ENCODE measurements at regions of chr1 and their contacts with region 1.

Region 1: GRCh38 chr1:1374929-1375662 is at the start of gene AURKAIP1:
- DNase-seq: peak; percentile 100
- H3K4me3 ChIP-seq: peak within 1 kb of the TSS; percentile 88 to 95 (median 92)
- H3K27ac ChIP-seq: peak within 1 kb of the TSS; percentile 76
- H3K4me1 ChIP-seq: peaks cover 27% of the 10 kb centered on the region
- H3K27me3 ChIP-seq: no peaks in the 10 kb centered on the region
- CTCF ChIP-seq: peak in 1 of 2 donors; percentile 52
- total RNA-seq, gene AURKAIP1: 85.0 to 167 TPM

Region 2: DNA sequence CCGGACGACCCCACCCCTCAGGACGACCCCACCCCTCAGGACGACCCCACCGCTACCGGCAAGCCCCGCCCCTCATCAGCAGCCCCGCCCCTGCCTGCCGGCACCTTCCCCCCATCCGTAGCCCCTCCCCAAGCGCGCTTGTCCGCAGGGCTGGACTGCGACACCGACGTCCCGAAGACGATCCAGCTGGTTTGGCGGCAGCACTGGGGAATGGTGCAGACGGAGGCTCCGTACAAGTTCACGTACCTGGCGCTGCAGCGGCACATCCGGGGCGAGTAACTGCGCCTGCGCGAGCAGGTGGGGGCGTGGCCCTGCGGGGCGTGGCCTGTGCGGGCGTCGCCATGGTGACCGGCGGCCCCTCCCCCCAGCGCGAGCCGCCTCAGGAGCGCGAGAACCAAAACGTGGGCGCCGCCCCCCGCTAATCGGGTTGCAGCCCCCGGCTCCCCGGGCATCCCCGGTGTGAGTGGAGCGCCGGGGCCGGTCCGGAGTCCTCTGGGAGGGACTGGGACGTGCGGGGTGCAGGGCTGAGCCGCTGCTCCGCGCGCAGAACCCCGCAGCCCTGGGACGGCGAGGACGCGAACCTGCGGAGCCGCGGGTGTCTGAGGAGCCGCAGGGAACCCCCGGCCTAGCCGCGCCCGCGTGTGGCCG is 305.9 kb before region 1 on chr1:
- CTCF ChIA-PET with region 1: no interaction called
- dilution Hi-C with region 1: loop called (anchors 5 kb)
- in situ Hi-C with region 1: no loop called
- intact Hi-C with region 1: no loop called
- DNase-seq: peak; percentile 69
- H3K4me3 ChIP-seq: peak overlapping the region in 2 of 3 experiments; percentile 50 to 69
- H3K27ac ChIP-seq: no peak overlapping the region
- H3K4me1 ChIP-seq: peaks cover 25% of the 10 kb centered on the region
- H3K27me3 ChIP-seq: no peaks in the 10 kb centered on the region
- CTCF ChIP-seq: no peak

Region 3: DNA sequence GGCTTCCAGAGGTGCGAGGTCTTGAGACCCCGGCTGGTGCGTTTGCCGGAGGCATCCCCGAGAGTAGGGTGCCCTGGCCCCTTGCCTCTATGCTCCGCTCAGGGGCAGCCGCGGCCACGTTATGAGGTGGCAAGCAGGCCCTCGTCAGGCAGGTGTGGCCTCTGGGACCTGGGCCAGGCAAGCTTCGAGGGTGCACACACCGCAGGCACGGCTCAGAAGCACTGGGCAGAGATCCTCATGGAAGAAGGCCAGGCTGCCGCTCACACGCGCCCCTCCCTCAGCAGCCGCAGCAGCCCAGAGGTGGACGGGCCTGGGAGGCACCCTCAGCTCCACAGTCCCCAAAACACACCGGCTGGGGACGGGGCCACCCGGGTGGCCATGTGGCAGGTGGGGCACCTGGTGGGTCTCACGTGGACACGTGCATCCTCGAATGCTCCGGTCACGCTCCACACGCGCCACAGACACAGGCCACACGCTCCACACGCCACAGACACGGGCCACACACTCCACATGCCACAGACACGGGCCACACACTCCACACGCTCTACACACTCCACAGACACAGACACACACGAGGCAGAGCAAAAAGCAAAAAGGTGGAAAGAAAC is 149.8 kb before region 1 on chr1:
- CTCF ChIA-PET with region 1: no interaction called
- dilution Hi-C with region 1: no loop called
- in situ Hi-C with region 1: no loop called
- intact Hi-C with region 1: no loop called
- DNase-seq: no peak
- H3K4me3 ChIP-seq: no peak overlapping the region
- H3K27ac ChIP-seq: no peak overlapping the region
- H3K4me1 ChIP-seq: peaks cover 6% of the 10 kb centered on the region
- H3K27me3 ChIP-seq: no peaks in the 10 kb centered on the region
- CTCF ChIP-seq: no peak

Region 4: DNA sequence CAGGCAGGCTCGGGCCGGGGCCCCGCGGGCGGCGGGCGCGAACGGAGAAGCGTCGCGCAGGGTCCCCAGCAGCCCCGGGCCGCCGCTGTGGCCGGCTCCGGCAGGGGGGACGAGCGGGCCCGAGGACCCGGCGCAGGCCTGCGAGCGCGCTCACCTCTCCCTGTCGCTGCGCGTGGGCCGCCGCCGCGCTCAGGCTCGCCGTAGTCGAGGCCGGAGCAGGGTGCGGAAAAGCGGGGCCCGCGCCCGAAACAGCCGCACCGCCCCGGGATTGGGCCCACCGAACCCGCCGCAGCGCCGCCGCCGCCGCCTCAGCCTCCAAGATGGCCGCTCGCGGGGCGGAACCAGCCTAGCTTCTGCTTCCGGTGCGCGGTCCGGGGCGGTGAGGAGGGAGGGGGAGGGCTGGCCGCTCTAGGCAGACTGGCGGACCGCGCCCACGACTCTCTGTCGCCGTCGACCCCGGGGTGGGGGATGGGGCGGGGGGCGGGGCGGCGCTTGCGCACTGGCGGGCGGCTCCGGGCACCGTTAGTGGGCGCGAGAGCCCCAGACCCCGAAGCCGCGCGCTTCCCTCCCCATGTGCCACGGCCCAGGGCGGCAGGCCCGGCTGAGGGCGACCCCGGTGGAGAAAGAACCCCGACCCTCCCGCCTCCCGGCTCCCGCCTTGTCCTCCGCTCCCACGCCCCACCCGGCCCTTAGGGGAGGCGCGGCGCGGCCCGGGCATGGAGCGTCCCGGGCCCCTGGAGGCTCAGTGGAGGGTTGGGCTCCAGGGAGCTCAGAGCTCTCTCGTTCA is 101.4 kb before region 1 on chr1 and contains the start of gene UBE2J2:
- CTCF ChIA-PET with region 1: no interaction called
- dilution Hi-C with region 1: loop called (anchors 5 kb)
- in situ Hi-C with region 1: no loop called
- intact Hi-C with region 1: no loop called
- DNase-seq: peak; percentile 74
- H3K4me3 ChIP-seq: peak within 1 kb of the TSS; percentile 59 to 87 (median 80)
- H3K27ac ChIP-seq: peak within 1 kb of the TSS; percentile 46
- H3K4me1 ChIP-seq: peaks cover 31% of the 10 kb centered on the region
- H3K27me3 ChIP-seq: no peaks in the 10 kb centered on the region
- CTCF ChIP-seq: no peak
- total RNA-seq, gene UBE2J2: 36.7 to 59.7 TPM

Region 5: GRCh38 chr1:1418463-1419350 is 43.6 kb after region 1 on chr1:
- CTCF ChIA-PET with region 1: no interaction called
- dilution Hi-C with region 1: no loop called
- in situ Hi-C with region 1: no loop called
- intact Hi-C with region 1: no loop called
- DNase-seq: no peak
- H3K4me3 ChIP-seq: no peak overlapping the region
- H3K27ac ChIP-seq: no peak overlapping the region
- H3K4me1 ChIP-seq: peaks cover 43% of the 10 kb centered on the region
- H3K27me3 ChIP-seq: no peaks in the 10 kb centered on the region
- CTCF ChIP-seq: no peak

Region 6: GRCh38 chr1:1435106-1435903 is 60.2 kb after region 1 on chr1 and contains the start of gene VWA1:
- CTCF ChIA-PET with region 1: no interaction called
- dilution Hi-C with region 1: loop called (anchors 5 kb)
- in situ Hi-C with region 1: no loop called
- intact Hi-C with region 1: loop called (anchors 2 kb)
- DNase-seq: peak; percentile 51
- H3K4me3 ChIP-seq: peak within 1 kb of the TSS in 2 of 3 experiments; percentile 47 to 52
- H3K27ac ChIP-seq: no peak within 1 kb of the TSS
- H3K4me1 ChIP-seq: peaks cover 48% of the 10 kb centered on the region
- H3K27me3 ChIP-seq: no peaks in the 10 kb centered on the region
- CTCF ChIP-seq: no peak
- total RNA-seq, gene VWA1: 11.3 to 27.3 TPM

Region 7: DNA sequence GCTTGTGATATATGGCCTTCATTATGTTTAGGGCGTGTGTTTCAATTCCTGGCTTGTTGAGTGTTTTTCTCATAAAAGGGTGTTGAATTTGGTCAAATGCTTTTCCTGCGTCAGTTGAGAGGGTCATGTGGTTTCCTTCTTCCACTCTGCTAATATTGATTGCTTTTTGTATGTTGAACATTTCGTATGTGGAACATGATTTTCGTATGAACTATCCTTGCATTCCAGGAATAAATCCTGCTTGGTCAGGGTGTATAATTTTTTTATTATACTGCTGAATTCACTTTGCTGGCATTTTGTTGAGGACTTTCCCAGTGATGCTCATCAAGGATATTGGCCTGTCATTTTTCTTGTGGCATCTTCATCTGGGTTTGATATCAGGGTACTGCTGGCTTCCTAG is 132.2 kb after region 1 on chr1:
- CTCF ChIA-PET with region 1: no interaction called
- dilution Hi-C with region 1: no loop called
- in situ Hi-C with region 1: no loop called
- intact Hi-C with region 1: loop called (anchors 10 kb)
- DNase-seq: no peak
- H3K4me3 ChIP-seq: no peak overlapping the region
- H3K27ac ChIP-seq: no peak overlapping the region
- H3K4me1 ChIP-seq: peaks cover 16% of the 10 kb centered on the region
- H3K27me3 ChIP-seq: no peaks in the 10 kb centered on the region
- CTCF ChIP-seq: no peak

Region 8: GRCh38 chr1:1615256-1616044 is 240.4 kb after region 1 on chr1 and contains the start of gene MIB2:
- CTCF ChIA-PET with region 1: no interaction called
- dilution Hi-C with region 1: loop called (anchors 10 kb)
- in situ Hi-C with region 1: no loop called
- intact Hi-C with region 1: no loop called
- DNase-seq: peak; percentile 92
- H3K4me3 ChIP-seq: peak within 1 kb of the TSS; percentile 91 to 99 (median 93)
- H3K27ac ChIP-seq: peak within 1 kb of the TSS; percentile 89
- H3K4me1 ChIP-seq: peaks cover 17% of the 10 kb centered on the region
- H3K27me3 ChIP-seq: no peaks in the 10 kb centered on the region
- CTCF ChIP-seq: no peak
- total RNA-seq, gene MIB2: 44.8 to 48.5 TPM